B cell (primary cell): ENCODE measurements at regions of chr7 and their contacts with region 1.

Region 1: GRCh38 chr7:50369143-50370026 is 64.9 kb downstream of the IKZF1 start:
- DNase-seq: peak; percentile 83
- ATAC-seq: peak; percentile 70
- H3K4me3 ChIP-seq: no peak overlapping the region
- H3K4me3 Mint-ChIP-seq: no peak overlapping the region
- H3K27ac ChIP-seq: peak overlapping the region in 1 of 2 donors; percentile 71
- H3K27ac Mint-ChIP-seq: peak overlapping the region; percentile 74
- H3K4me1 ChIP-seq: peaks cover 35 to 58% of the 10 kb centered on the region in 2 donors
- H3K4me1 Mint-ChIP-seq: peaks cover 91% of the 10 kb centered on the region
- H3K27me3 ChIP-seq: no peaks in the 10 kb centered on the region
- H3K27me3 Mint-ChIP-seq: no peaks in the 10 kb centered on the region
- CTCF ChIP-seq: peak; percentile 92

Region 2: GRCh38 chr7:50142425-50143017 is 226.9 kb before region 1 on chr7:
- CTCF ChIA-PET with region 1: interaction called, 20 read pairs
- POLR2A ChIA-PET with region 1: no interaction called
- intact Hi-C with region 1: loop called (anchors 1 kb)
- DNase-seq: peak; percentile 71
- ATAC-seq: peak; percentile 71
- H3K4me3 ChIP-seq: peak overlapping the region in 4 of 5 experiments; percentile 8 to 33 (median 30)
- H3K4me3 Mint-ChIP-seq: peak overlapping the region; percentile 80
- H3K27ac ChIP-seq: peak overlapping the region in 1 of 2 donors; percentile 62
- H3K27ac Mint-ChIP-seq: peak overlapping the region; percentile 62
- H3K4me1 ChIP-seq: peaks cover 42 to 50% of the 10 kb centered on the region in 2 donors
- H3K4me1 Mint-ChIP-seq: peaks cover 49% of the 10 kb centered on the region
- H3K27me3 ChIP-seq: no peaks in the 10 kb centered on the region
- H3K27me3 Mint-ChIP-seq: no peaks in the 10 kb centered on the region
- CTCF ChIP-seq: peak; percentile 94

Region 3: DNA sequence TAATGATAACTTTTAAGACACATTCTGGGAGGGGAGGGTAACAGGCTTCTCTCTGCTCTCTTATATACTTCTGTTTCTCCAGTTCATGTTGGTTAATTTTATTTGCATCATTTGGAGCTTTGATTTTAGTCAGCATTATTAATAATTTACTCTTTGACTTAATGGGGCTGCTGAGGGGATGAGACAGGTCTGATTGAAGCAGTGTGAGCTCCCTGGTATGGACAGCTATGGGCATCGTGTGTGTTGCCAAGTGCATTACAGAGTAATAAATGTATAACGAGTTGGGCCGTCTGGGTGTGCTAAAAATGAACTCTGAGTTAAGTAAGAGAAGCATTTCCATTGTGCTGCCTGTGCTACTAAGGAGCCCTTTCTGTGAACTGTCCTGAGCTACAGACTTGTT is 96.6 kb before region 1 on chr7:
- CTCF ChIA-PET with region 1: interaction called, 11 read pairs
- POLR2A ChIA-PET with region 1: no interaction called
- intact Hi-C with region 1: no loop called
- DNase-seq: no peak
- ATAC-seq: no peak
- H3K4me3 ChIP-seq: no peak overlapping the region
- H3K4me3 Mint-ChIP-seq: no peak overlapping the region
- H3K27ac ChIP-seq: no peak overlapping the region
- H3K27ac Mint-ChIP-seq: peak overlapping the region; percentile 1
- H3K4me1 ChIP-seq: peaks cover 87 to 94% of the 10 kb centered on the region in 2 donors
- H3K4me1 Mint-ChIP-seq: peaks cover 86% of the 10 kb centered on the region
- H3K27me3 ChIP-seq: no peaks in the 10 kb centered on the region
- H3K27me3 Mint-ChIP-seq: no peaks in the 10 kb centered on the region
- CTCF ChIP-seq: no peak

Region 4: DNA sequence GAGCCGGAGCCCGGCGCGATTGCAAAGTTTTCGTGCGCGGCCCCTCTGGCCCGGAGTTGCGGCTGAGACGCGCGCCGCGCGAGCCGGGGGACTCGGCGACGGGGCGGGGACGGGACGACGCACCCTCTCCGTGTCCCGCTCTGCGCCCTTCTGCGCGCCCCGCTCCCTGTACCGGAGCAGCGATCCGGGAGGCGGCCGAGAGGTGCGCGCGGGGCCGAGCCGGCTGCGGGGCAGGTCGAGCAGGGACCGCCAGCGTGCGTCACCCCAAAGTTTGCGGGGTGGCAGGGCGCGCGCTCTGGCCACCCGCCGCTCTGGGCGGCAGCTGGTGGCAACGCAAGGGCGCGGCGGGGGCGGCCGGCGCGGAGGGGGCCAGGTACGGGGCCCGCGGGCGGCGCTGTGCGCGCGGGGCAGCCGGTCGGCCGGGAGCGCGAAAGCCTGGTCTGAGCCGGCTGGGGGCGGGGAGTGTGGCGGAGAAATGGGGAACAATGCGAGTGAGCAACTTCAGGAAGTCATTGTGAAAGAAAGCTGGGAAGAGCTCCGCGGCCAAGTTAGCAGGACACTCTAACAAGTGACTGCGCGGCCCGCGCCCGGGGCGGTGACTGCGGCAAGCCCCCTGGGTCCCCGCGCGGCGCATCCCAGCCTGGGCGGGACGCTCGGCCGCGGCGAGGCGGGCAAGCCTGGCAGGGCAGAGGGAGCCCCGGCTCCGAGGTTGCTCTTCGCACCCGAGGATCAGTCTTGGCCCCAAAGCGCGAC is 65.1 kb before region 1 on chr7 and contains the start of gene IKZF1:
- CTCF ChIA-PET with region 1: interaction called, 111 read pairs
- POLR2A ChIA-PET with region 1: interaction called, 5 read pairs
- intact Hi-C with region 1: loop called (anchors 1 kb)
- DNase-seq: peak; percentile 89
- ATAC-seq: peak; percentile 50
- H3K4me3 ChIP-seq: peak within 1 kb of the TSS; percentile 74 to 99 (median 87)
- H3K4me3 Mint-ChIP-seq: peak within 1 kb of the TSS; percentile 91
- H3K27ac ChIP-seq: peak within 1 kb of the TSS; percentile 71 to 83
- H3K27ac Mint-ChIP-seq: peak within 1 kb of the TSS; percentile 94
- H3K4me1 ChIP-seq: peaks cover 18 to 32% of the 10 kb centered on the region in 2 donors
- H3K4me1 Mint-ChIP-seq: peaks cover 36% of the 10 kb centered on the region
- H3K27me3 ChIP-seq: no peaks in the 10 kb centered on the region
- H3K27me3 Mint-ChIP-seq: no peaks in the 10 kb centered on the region
- CTCF ChIP-seq: peak; percentile 11
- total RNA-seq, gene IKZF1: 254 and 261 TPM in 2 replicates

Region 5: GRCh38 chr7:50335795-50336754 is 33.3 kb before region 1 on chr7:
- CTCF ChIA-PET with region 1: interaction called, 37 read pairs
- POLR2A ChIA-PET with region 1: interaction called, 4 read pairs
- intact Hi-C with region 1: loop called (anchors 2 kb)
- DNase-seq: peak; percentile 58
- ATAC-seq: peak; percentile 63
- H3K4me3 ChIP-seq: no peak overlapping the region
- H3K4me3 Mint-ChIP-seq: no peak overlapping the region
- H3K27ac ChIP-seq: peak overlapping the region; percentile 72 to 95
- H3K27ac Mint-ChIP-seq: no peak overlapping the region
- H3K4me1 ChIP-seq: peaks cover 100% of the 10 kb centered on the region in 2 donors
- H3K4me1 Mint-ChIP-seq: peaks cover 14% of the 10 kb centered on the region
- H3K27me3 ChIP-seq: no peaks in the 10 kb centered on the region
- H3K27me3 Mint-ChIP-seq: no peaks in the 10 kb centered on the region
- CTCF ChIP-seq: no peak

Region 6: GRCh38 chr7:50397320-50397970 is 28.1 kb after region 1 on chr7:
- CTCF ChIA-PET with region 1: interaction called, 11 read pairs
- POLR2A ChIA-PET with region 1: no interaction called
- intact Hi-C with region 1: no loop called
- DNase-seq: peak; percentile 60
- ATAC-seq: no peak
- H3K4me3 ChIP-seq: peak overlapping the region in 1 of 5 experiments; percentile 23
- H3K4me3 Mint-ChIP-seq: peak overlapping the region; percentile 75
- H3K27ac ChIP-seq: peak overlapping the region; percentile 86 to 94
- H3K27ac Mint-ChIP-seq: peak overlapping the region; percentile 97
- H3K4me1 ChIP-seq: peaks cover 65 to 70% of the 10 kb centered on the region in 2 donors
- H3K4me1 Mint-ChIP-seq: peaks cover 77% of the 10 kb centered on the region
- H3K27me3 ChIP-seq: no peaks in the 10 kb centered on the region
- H3K27me3 Mint-ChIP-seq: no peaks in the 10 kb centered on the region
- CTCF ChIP-seq: no peak